GM12878 (cell line): ENCODE measurements at regions of chr1 and their contacts with region 1.

Region 1: DNA sequence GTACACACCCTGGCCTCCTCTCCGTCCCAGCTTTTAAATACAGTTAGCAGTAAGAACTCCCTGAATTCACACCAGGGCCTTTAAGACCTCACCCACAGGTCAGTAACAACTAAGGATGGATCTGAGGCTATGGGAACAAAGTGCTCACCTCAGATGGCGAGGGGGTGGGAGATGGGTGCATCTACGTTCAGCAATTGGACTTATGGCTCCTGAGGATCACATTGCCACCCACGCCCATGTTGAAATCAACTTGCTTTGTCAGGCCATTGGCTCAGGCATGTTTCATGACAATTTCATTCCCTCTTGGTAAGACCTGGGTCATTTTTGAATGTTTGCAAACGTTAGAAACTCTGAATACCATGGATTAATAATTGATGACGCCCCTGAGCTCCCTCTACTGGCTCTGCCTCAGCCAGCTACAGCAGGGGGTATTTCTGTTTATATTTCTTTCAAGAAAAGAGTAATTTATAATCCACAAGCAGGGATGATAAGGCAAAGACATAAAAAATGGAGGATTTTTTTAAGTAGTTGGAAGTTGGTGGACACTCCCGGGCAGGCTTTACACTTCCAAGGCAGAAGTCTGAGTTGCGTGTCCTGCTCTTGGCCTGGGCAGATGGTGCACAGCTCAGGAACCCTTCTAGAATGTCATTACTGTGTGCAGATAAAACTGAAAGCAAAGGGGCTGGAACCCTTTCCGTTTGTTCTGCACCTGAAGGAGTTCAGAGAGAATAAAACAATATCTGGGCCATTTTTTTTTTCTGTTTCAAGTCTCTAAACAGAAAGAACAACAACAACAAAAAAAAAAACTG is 13.7 kb upstream of the LBR start:
- DNase-seq: no peak
- ATAC-seq: peak; percentile 41
- H3K4me3 ChIP-seq: peak overlapping the region; percentile 2; the same call in 1 of the 2 replicates
- H3K27ac ChIP-seq: peak overlapping the region; percentile 59
- H3K4me1 ChIP-seq: peaks cover 33% of the 10 kb centered on the region
- H3K27me3 ChIP-seq: no peaks in the 10 kb centered on the region
- CTCF ChIP-seq: peak; percentile 39 to 46 (median 45); a peak in 5 of 6 replicates
- EP300 ChIP-seq: no peak
- POLR2A ChIP-seq: no peak
- RAD21 ChIP-seq: peak; percentile 37; the same call in 1 of the 2 replicates

Region 2: DNA sequence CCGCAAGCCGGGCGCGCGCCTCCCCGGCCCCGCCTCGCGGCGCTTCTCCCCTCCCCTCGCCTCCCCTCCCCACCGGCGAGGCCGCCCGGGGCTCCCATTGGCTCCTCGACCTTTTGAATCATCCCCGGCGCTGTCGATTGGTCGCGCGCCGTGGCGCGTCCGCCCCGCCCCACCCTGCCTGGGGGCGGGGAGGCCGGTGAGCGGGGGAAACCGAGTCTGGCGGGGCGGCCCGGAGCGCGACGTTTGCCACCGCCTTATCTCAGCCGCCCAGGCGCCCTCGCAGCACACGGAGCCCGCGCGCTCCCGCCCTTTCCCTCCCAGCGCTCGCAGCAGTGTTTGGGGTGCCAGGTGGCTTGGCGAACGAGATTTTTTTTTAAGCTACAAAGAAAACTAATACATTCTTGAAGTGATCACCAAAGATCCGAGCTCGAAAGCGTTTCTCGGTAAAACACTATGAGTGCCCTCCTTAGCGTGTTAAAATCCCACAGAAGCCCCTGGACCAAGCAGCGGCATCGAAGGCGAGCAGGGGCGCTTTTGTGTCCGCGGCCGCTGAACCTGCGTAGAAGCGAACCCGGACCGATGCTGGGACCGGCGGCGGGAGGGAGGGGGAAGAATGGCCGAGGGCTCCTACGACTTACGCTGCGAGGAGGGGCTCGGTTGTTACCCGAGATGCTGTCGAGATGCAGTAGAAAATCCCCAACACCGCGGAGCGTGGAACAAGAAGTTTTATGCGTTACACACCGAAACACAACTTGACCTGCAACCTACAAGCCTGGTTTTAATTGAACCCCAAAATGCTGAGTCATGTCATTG is 13.2 kb before region 1 on chr1:
- CTCF ChIA-PET with region 1: interaction called, 53 read pairs
- POLR2A ChIA-PET with region 1: interaction called, 31 read pairs
- RAD21 ChIA-PET with region 1: interaction called, 22 read pairs
- SMC1A ChIA-PET with region 1: interaction called, 108 read pairs
- in situ Hi-C with region 1: no loop called
- intact Hi-C with region 1: loop called (anchors 1 kb)
- DNase-seq: peak; percentile 65
- ATAC-seq: peak; percentile 92
- H3K4me3 ChIP-seq: peak overlapping the region; percentile 80
- H3K27ac ChIP-seq: peak overlapping the region; percentile 96
- H3K4me1 ChIP-seq: peaks cover 17% of the 10 kb centered on the region
- H3K27me3 ChIP-seq: no peaks in the 10 kb centered on the region
- CTCF ChIP-seq: no peak
- EP300 ChIP-seq: no peak
- POLR2A ChIP-seq: peak; percentile 93
- RAD21 ChIP-seq: no peak

Region 3: DNA sequence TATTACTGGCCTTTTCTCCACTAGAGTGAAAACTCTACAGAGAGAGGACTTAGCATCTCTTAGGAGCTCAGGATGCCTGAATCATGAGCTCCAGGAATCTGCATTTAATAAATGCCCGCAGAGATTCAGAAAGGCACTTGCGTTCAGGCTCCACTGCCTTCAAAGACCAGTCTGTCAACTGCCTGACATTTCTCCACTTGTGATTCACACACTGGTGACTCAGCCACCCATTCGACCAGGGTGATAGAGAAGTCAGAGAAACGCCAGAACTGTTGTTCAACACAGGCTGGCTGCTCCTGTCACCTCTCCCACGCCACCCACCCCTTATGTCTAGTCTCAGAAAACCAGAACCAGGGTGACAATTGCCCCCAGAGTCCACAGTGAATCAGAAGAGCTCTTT is 13.2 kb after region 1 on chr1:
- CTCF ChIA-PET with region 1: interaction called, 9 read pairs
- POLR2A ChIA-PET with region 1: interaction called, 4 read pairs
- RAD21 ChIA-PET with region 1: interaction called, 7 read pairs
- SMC1A ChIA-PET with region 1: interaction called, 11 read pairs
- in situ Hi-C with region 1: no loop called
- intact Hi-C with region 1: no loop called
- DNase-seq: no peak
- ATAC-seq: peak; percentile 78
- H3K4me3 ChIP-seq: no peak overlapping the region
- H3K27ac ChIP-seq: no peak overlapping the region
- H3K4me1 ChIP-seq: no peaks in the 10 kb centered on the region
- H3K27me3 ChIP-seq: no peaks in the 10 kb centered on the region
- CTCF ChIP-seq: no peak
- EP300 ChIP-seq: no peak
- POLR2A ChIP-seq: no peak
- RAD21 ChIP-seq: no peak